Spleen (tissue), 13 donors: ENCODE measurements at regions of chr17 and their contacts with region 1.

Region 1: DNA sequence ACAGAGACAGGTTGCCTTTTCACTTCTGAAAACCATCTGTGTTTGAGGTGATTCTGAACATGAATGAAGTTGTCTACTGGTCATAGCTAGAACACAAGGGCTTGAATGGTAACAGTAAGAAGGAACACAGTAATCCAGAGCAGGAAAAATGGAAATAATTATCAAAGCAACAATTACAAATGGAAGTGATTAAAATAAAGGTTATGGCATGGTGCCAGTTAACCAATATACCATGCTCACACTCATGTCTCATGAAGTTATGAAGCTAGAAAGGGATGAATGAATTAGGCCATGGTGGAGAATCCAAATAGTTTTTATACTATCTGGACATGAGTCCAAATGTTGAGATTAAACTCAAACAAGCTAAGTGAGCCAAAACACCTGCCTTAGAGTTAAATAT is 9.7 kb downstream of the KIF2B start:
- DNase-seq: no peak
- H3K4me3 ChIP-seq: no peak overlapping the region
- H3K27ac ChIP-seq: no peak overlapping the region
- H3K4me1 ChIP-seq: no peaks in the 10 kb centered on the region
- H3K27me3 ChIP-seq: no peaks in the 10 kb centered on the region
- CTCF ChIP-seq: no peak
- POLR2A ChIP-seq: no peak

Region 2: DNA sequence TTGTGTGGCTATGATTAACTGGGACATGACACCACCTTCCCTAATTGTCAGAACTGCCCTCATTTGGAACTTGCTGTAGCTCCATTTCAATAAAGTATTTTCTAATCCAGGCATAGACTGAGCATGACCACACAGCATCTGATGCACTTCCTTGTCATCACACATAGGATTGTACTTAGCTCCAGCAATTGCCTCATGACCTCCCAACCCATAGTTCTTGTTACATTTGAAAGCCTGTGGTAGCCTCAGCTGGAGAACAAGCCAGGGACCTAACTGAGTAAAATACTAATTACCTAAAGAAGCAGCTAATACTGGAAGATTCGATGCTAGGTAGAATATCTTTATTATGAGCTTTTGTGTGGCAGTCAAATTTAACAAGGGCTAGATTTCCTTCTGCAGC is 196.9 kb before region 1 on chr17:
- intact Hi-C with region 1: no loop called
- DNase-seq: no peak
- H3K4me3 ChIP-seq: no peak overlapping the region
- H3K27ac ChIP-seq: no peak overlapping the region
- H3K4me1 ChIP-seq: no peaks in the 10 kb centered on the region
- H3K27me3 ChIP-seq: no peaks in the 10 kb centered on the region
- CTCF ChIP-seq: no peak
- POLR2A ChIP-seq: no peak

Region 3: DNA sequence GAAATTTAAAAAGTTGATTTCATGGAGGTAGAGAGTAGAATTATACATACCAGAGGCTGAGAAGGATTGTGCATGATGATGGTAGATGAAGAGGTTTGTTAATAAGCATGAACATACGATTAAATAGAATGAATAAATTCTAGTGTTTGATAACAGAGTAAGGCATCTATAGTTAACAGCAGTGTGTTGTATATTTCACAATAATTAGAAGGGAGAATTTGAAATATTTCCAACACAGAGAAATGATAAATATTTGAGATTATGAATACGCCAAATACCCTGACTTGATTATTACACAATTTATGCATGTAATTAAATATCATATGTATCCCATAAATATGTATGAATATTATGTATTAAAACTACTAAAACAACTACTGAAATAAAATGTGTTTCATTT is 127.5 kb after region 1 on chr17:
- intact Hi-C with region 1: no loop called
- DNase-seq: no peak
- H3K4me3 ChIP-seq: no peak overlapping the region
- H3K27ac ChIP-seq: no peak overlapping the region
- H3K4me1 ChIP-seq: no peaks in the 10 kb centered on the region
- H3K27me3 ChIP-seq: no peaks in the 10 kb centered on the region
- CTCF ChIP-seq: no peak
- POLR2A ChIP-seq: no peak

Region 4: DNA sequence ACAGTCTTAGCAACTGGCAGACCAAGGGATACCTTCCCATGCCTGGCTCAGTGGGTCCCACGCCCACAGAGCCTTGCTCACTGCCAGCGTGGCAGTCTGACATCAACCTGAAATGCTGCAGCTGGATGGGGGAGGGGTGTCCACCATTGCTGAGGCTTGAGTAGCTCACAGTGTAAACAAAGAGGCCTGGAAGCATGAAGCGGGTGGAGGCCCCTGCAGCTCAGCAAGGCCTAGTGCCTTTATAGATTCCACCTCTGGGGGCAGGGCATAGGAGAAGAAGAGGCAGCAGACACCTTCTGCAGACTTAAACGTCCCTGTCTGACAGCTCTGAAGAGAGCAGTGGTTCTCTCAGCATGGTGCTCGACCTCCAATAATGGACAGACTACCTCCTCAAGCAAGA is 253.5 kb after region 1 on chr17:
- intact Hi-C with region 1: loop called (anchors 5 kb)
- DNase-seq: no peak
- H3K4me3 ChIP-seq: no peak overlapping the region
- H3K27ac ChIP-seq: no peak overlapping the region
- H3K4me1 ChIP-seq: no peaks in the 10 kb centered on the region
- H3K27me3 ChIP-seq: no peaks in the 10 kb centered on the region
- CTCF ChIP-seq: no peak
- POLR2A ChIP-seq: no peak